ENCODE measurements at regions of chr7 and their contacts with region 1.

Region 1: GRCh38 chr7:117750612-117751563 is 122.4 kb downstream of the CTTNBP2 start:
- DNase-seq: no peak
- ATAC-seq: no peak
- H3K4me3 ChIP-seq: no peak overlapping the region
- H3K27ac ChIP-seq: no peak overlapping the region
- H3K4me1 ChIP-seq: peaks cover 0 to 10% (median 0%) of the 10 kb centered on the region in 9 donors
- H3K27me3 ChIP-seq: no peaks in the 10 kb centered on the region
- CTCF ChIP-seq: peak; percentile 23 to 69 (median 57)

Region 2: GRCh38 chr7:117873310-117874190 is 122.7 kb after region 1 on chr7 and contains the start of gene CTTNBP2:
- intact Hi-C with region 1: loop called in 4 of 10 experiments (anchors 5 to 10 kb)
- DNase-seq: peak; percentile 33 to 57
- ATAC-seq: peak; percentile 62 to 90 (median 78)
- H3K4me3 ChIP-seq: peak within 1 kb of the TSS; percentile 57 to 91 (median 80)
- H3K27ac ChIP-seq: peak within 1 kb of the TSS in 7 of 10 donors; percentile 22 to 76 (median 70)
- H3K4me1 ChIP-seq: peaks cover 0 to 29% (median 12%) of the 10 kb centered on the region in 9 donors
- H3K27me3 ChIP-seq: peaks cover 0 to 63% (median 17%) of the 10 kb centered on the region in 7 donors
- CTCF ChIP-seq: peak in 3 of 9 donors; percentile 11 to 30 (median 16)
- total RNA-seq, gene CTTNBP2: 0.49 to 2.0 (median 0.97) TPM

Region 3: DNA sequence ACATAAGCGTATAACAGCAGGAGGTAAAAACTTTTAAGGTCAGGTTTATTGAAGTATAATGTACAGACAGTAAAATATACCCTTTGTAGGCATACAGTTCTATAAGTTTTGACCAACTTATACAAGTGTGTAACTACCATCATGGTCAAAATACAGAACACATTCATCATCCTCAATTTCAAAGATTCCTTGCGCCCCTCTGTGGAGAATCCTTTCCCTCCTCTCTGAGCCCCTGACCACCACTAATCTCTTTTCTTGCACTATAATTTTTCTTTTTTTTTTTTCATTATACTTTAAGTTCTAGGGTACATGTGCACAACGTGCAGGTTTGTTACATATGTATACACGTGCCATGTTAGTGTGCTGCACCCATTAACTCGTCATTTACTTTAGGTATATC is 180.4 kb after region 1 on chr7:
- intact Hi-C with region 1: loop called in 1 of 10 experiments (anchors 5 kb)
- DNase-seq: no peak
- ATAC-seq: no peak
- H3K4me3 ChIP-seq: no peak overlapping the region
- H3K27ac ChIP-seq: no peak overlapping the region
- H3K4me1 ChIP-seq: no peaks in the 10 kb centered on the region
- H3K27me3 ChIP-seq: no peaks in the 10 kb centered on the region
- CTCF ChIP-seq: peak in 1 of 9 donors; percentile 16

Region 4: GRCh38 chr7:118104812-118105441 is 354.0 kb after region 1 on chr7:
- intact Hi-C with region 1: loop called in 8 of 10 experiments (anchors 5 to 10 kb)
- DNase-seq: no peak
- ATAC-seq: no peak
- H3K4me3 ChIP-seq: no peak overlapping the region
- H3K27ac ChIP-seq: no peak overlapping the region
- H3K4me1 ChIP-seq: no peaks in the 10 kb centered on the region
- H3K27me3 ChIP-seq: no peaks in the 10 kb centered on the region
- CTCF ChIP-seq: peak in 7 of 9 donors; percentile 46 to 62 (median 53)

Region 5: DNA sequence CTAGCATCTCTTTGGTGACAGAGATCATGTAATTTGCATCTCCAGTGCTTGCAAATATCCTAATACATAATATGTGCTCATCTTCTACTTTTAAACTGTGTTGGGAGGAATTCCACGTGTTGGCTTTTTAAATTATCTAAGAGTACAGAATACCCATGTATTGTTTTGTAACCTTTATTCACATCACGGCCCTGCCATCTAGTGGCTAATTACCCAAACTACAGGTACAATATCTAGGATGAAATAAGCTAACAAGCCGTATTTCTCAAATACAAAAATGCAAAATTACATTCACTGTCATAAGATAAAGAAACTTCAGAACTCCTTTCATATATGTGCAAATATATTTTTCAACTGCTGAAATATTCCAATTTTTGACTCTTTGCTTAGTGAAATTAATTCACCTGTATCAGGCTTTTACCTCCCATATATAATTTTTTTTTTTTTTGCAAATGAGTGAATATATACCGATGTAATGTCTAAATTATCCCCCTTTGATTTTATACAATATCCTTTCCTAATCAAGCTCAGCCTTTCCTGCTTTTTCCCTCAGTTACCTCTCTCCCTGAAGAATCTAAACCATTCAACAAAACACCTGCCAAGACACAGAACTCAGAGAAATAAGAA is 402.8 kb after region 1 on chr7:
- intact Hi-C with region 1: loop called in 1 of 10 experiments (anchors 5 kb)
- DNase-seq: no peak
- ATAC-seq: peak in 1 of 8 donors; percentile 33
- H3K4me3 ChIP-seq: no peak overlapping the region
- H3K27ac ChIP-seq: no peak overlapping the region
- H3K4me1 ChIP-seq: peaks cover 0 to 6% (median 0%) of the 10 kb centered on the region in 9 donors
- H3K27me3 ChIP-seq: no peaks in the 10 kb centered on the region
- CTCF ChIP-seq: peak; percentile 35 to 75 (median 65)